CD14-positive monocyte (primary cell): ENCODE measurements at regions of chr14 and their contacts with region 1.

Region 1: DNA sequence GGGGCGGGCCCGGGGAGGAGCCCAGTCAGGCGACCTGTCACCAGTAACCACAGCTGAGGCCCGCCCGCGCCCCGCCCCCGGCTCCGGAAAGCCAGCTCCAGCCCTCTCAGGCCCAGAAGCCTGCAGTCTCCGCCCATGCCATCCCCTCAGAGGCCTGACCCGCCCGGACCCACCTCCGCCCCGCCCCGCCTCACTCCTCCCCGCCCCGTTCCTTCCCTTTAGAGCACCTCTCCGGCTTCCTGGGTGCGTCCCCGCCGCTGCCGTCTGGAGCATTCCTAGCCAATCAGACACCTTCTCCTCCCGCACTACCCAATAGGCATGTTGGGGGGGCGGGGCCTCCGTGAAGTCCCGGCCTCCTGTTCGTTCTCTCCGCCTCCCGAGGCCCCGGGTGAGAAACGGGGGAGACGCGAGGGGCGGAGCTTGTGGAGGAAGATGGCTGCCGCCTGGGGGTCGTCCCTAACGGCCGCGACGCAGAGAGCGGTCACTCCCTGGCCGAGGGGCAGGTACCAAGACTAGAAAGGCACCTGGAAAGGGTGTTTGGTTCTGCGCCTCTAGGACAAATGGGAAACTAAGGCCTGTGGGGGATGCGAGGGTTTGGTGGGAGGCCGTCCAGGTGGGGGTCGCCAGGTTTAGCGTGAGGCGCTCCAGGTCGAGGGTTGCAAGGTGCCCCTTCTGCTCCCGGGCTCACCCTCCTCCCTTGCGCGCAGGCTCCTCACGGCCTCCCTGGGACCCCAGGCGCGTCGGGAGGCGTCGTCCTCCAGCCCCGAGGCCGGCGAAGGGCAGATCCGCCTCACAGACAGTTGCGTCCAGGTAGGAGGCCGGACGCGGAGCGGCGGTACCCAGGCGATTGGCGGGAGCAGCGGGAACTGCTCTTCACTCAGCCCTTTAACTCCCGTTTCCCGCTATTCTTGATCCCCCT is at the start of gene ISCA2:
- DNase-seq: peak; percentile 98 to 99 (median 98)
- H3K4me3 ChIP-seq: peak within 1 kb of the TSS; percentile 75 to 97 (median 86)
- H3K4me3 Mint-ChIP-seq: peak within 1 kb of the TSS; percentile 84 to 92
- H3K27ac ChIP-seq: peak within 1 kb of the TSS; percentile 90 to 98
- H3K27ac Mint-ChIP-seq: peak within 1 kb of the TSS in 6 of 7 donors; percentile 87 to 94 (median 92)
- H3K4me1 ChIP-seq: peaks cover 50 to 57% of the 10 kb centered on the region in 2 donors
- H3K4me1 Mint-ChIP-seq: peaks cover 38% of the 10 kb centered on the region
- H3K27me3 ChIP-seq: no peaks in the 10 kb centered on the region
- H3K27me3 Mint-ChIP-seq: no peaks in the 10 kb centered on the region
- CTCF ChIP-seq: no peak
- polyA plus RNA-seq, gene ISCA2: 6.1 to 61.7 (median 55.9) TPM

Region 2: DNA sequence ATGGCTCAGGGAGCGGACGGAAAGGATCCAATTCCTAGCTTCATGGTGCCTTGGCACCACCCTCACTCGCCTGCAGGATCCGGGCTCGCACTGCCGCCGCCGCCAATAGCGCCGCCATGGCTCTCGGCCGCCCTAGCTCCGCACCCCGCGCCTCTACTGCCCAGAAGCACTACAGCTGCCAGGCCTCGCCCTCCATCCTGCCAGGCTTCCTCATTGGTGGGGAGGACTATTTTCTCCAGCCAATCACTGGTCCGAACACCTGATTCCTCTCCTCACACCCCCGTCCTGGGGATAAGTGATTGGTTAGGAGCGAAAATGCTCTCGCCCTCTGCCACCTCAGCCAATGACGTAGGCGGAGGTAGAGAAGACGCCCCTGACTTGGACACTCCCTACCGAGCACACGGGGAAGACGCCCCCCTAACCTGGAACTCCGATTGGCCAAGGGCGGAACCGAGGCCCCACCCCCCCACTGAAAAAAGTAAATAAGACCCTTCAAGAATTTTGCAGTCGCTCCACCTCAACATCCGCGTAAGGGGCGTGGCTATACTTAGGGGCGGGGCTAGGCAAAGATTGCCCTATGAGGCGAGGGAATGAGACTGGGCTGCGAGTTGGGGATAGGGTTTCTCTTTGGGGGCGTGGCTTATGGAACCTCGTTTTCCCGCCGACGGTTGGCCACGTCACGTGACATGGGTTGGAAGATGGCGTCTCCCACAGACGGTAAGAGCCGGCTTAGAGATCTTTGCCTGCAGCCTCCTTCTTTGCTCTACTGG is 409.1 kb before region 1 on chr14 and contains the starts of genes ALDH6A1 and LIN52:
- intact Hi-C with region 1: loop called (anchors 5 kb)
- DNase-seq: peak; percentile 100
- H3K4me3 ChIP-seq: peak within 1 kb of the TSS; percentile 85 to 86 (median 85)
- H3K4me3 Mint-ChIP-seq: peak within 1 kb of the TSS; percentile 94 to 100
- H3K27ac ChIP-seq: peak within 1 kb of the TSS; percentile 25 to 77
- H3K27ac Mint-ChIP-seq: peak within 1 kb of the TSS; percentile 86 to 97 (median 92)
- H3K4me1 ChIP-seq: peaks cover 23 to 26% of the 10 kb centered on the region in 2 donors
- H3K4me1 Mint-ChIP-seq: peaks cover 28% of the 10 kb centered on the region
- H3K27me3 ChIP-seq: no peaks in the 10 kb centered on the region
- H3K27me3 Mint-ChIP-seq: peaks cover 0 to 3% (median 2%) of the 10 kb centered on the region in 3 donors
- CTCF ChIP-seq: peak; percentile 6
- polyA plus RNA-seq, gene ALDH6A1: 2.5 to 15.1 (median 8.8) TPM
- polyA plus RNA-seq, gene LIN52: 2.9 to 7.2 (median 4.8) TPM